ENCODE measurements at regions of chr2 and their contacts with region 1.

Region 1: DNA sequence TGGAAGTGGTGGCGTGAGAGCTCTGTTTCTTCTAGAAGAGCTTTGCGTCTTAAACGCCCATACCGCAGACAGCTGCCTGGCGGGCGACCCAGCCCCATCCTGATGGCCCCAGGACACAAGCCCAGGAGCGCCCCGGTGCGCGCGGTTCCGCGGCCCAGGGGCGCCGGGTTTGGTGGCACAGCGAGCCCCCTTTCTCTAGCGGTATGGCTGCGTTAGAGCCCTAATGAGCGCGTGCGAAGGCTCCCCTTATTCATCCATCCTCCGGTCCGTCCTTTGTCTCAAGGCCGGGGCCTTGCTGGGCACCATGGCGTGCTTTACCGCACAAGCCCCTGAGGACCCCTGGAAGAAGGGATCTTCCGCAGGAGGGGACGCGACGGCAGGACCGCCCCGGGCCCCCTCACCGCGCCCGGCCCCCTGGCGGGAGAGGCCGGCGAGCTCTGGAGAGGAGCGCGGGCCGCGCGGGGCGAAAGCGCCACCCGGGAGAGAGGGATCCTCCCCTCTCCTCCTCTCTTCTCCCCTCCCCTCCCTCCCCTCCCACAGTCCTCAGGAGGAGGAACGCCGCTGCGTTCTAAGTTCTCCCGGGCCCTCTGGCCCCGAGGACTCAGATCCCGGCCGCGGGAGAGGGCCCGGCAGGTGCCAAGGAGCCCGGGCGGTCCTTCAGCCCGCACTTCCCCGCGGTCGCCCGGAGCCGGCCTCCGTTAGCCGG is 626 bp upstream of the SLC1A4 start:
- DNase-seq: peak; percentile 77
- H3K4me3 Mint-ChIP-seq: peak overlapping the region; percentile 91
- H3K27ac Mint-ChIP-seq: peak overlapping the region; percentile 61
- H3K4me1 Mint-ChIP-seq: peaks cover 47% of the 10 kb centered on the region
- H3K27me3 Mint-ChIP-seq: no peaks in the 10 kb centered on the region
- CTCF ChIP-seq: peak; percentile 36

Region 2: DNA sequence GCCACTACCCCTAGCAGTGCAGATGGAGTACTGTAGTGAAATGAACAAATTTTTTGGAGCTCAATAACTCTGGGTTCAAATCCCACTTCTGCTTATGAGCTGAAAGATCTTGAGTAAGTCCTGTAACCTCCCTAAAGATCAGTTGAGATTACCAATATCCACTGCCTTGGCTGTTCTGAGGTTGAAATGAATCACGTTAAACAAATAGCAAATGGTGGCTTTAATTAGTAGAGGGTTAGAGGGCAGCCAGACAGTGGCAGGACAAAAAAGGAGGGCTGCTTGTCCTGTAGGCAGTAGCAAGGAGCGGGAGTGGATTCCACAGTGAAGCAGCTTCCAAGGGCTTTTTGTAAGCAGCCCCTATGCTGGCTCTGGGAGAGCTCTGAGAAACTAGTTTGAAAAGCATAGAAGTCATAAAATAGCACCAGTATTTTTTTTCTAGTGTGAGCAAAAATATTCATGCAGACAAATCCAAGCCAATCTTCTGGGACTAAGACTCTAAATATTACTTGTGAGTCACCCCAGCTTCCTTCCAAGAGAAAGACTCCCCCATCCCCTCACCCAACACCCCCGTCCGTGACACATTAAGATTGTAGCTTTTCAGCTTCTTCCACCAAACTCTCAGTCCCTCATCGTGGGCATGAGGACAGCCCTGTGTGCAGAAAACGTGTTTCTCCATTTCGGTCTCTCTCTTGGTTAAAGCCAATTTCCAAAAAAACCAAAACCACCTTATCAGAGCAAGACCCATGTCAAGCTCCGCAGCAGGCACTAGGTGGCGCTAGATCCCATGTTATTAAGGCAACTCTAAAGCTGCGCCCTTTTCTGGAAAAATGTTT is 658.1 kb before region 1 on chr2:
- CTCF ChIA-PET with region 1: no interaction called
- POLR2A ChIA-PET with region 1: no interaction called
- intact Hi-C with region 1: no loop called
- DNase-seq: peak; percentile 81
- H3K4me3 Mint-ChIP-seq: peak overlapping the region; percentile 49
- H3K27ac Mint-ChIP-seq: peak overlapping the region; percentile 64
- H3K4me1 Mint-ChIP-seq: peaks cover 6% of the 10 kb centered on the region
- H3K27me3 Mint-ChIP-seq: no peaks in the 10 kb centered on the region
- CTCF ChIP-seq: peak; percentile 94

Region 3: GRCh38 chr2:64943387-64944150 is 45.0 kb before region 1 on chr2:
- CTCF ChIA-PET with region 1: interaction called, 7 read pairs
- POLR2A ChIA-PET with region 1: interaction called, 6 read pairs
- intact Hi-C with region 1: loop called (anchors 5 kb)
- DNase-seq: peak; percentile 98
- H3K4me3 Mint-ChIP-seq: no peak overlapping the region
- H3K27ac Mint-ChIP-seq: peak overlapping the region; percentile 7
- H3K4me1 Mint-ChIP-seq: peaks cover 18% of the 10 kb centered on the region
- H3K27me3 Mint-ChIP-seq: peaks cover 10% of the 10 kb centered on the region
- CTCF ChIP-seq: no peak

Region 4: DNA sequence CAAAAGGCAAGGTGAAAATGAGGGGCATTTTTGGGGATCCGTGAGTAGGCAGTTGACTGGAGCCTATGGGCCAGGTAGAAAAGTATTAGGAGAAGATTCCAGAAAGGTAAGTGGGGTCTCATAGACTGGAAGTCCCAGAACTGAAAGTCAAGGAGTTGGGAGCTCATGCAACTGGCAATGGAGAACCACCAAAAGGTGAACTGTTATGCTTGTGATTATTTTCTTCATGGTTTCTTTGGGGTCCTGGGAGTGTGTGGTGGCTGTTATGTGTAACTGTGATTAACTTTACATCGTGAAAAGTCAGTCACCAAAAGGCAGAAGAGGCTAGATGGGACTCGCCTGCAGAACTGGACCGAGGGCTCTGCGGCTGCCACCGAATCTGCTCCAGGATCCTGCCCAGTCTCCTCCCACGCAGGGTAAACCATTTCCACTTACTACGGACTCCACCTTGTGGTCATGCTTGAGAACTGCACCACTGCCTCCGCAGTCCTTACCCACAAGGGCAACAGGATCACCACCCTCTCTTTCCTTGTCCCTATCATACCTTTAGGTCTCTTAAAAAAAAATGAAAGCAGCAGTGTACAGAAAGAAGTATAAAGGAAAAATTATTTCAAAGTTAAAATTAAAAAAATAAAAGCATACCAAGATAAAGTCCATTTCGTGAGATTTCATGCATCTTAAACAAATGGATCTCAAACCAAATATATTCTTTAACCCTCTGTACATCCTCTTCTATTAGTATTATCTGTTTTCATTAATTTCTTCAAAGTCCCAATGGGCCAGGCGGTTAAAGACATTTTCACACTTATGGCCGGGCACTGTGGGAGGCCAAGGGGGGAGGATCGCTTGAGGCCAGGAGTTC is 52.1 kb after region 1 on chr2:
- CTCF ChIA-PET with region 1: interaction called, 3 read pairs
- POLR2A ChIA-PET with region 1: interaction called, 4 read pairs
- intact Hi-C with region 1: loop called (anchors 2 kb)
- DNase-seq: peak; percentile 82
- H3K4me3 Mint-ChIP-seq: peak overlapping the region; percentile 65
- H3K27ac Mint-ChIP-seq: no peak overlapping the region
- H3K4me1 Mint-ChIP-seq: peaks cover 6% of the 10 kb centered on the region
- H3K27me3 Mint-ChIP-seq: no peaks in the 10 kb centered on the region
- CTCF ChIP-seq: peak; percentile 95

Region 5: GRCh38 chr2:65901756-65902155 is 913.2 kb after region 1 on chr2:
- CTCF ChIA-PET with region 1: no interaction called
- POLR2A ChIA-PET with region 1: no interaction called
- intact Hi-C with region 1: no loop called
- DNase-seq: no peak
- H3K4me3 Mint-ChIP-seq: no peak overlapping the region
- H3K27ac Mint-ChIP-seq: no peak overlapping the region
- H3K4me1 Mint-ChIP-seq: no peaks in the 10 kb centered on the region
- H3K27me3 Mint-ChIP-seq: no peaks in the 10 kb centered on the region
- CTCF ChIP-seq: no peak